ENCODE measurements at regions of chr5 and their contacts with region 1.

Region 1: GRCh38 chr5:17123010-17123409 is 94.4 kb upstream of the BASP1 start:
- DNase-seq: no peak
- ATAC-seq: peak in 2 of 4 donors; percentile 23 to 41
- H3K4me3 ChIP-seq: no peak overlapping the region
- H3K27ac ChIP-seq: no peak overlapping the region
- H3K4me1 ChIP-seq: peaks cover 0 to 17% (median 7%) of the 10 kb centered on the region in 12 donors
- H3K27me3 ChIP-seq: no peaks in the 10 kb centered on the region
- CTCF ChIP-seq: no peak
- POLR2A ChIP-seq: no peak

Region 2: DNA sequence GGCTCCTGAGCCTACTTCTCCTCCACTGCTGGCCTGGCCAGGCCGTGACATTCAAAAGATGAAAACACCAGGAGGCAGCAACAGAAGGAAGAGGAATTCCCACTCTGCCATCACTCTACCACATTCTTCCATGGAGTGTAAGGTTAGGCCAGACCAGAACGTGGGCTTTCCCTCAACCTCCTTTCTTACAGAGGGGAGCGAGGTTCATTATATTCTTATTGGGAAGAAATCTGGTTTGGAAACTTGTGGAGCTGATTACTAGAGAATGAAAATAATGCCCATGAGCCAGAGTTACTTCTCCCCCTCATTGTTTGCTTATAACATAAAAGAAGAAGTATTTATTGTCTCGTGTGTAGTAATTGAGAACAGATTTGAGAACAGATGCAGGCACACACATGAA is 41.9 kb before region 1 on chr5:
- intact Hi-C with region 1: loop called in 2 of 10 experiments (anchors 5 kb)
- DNase-seq: no peak
- ATAC-seq: no peak
- H3K4me3 ChIP-seq: no peak overlapping the region
- H3K27ac ChIP-seq: no peak overlapping the region
- H3K4me1 ChIP-seq: peaks cover 0 to 18% (median 3%) of the 10 kb centered on the region in 12 donors
- H3K27me3 ChIP-seq: no peaks in the 10 kb centered on the region
- CTCF ChIP-seq: no peak
- POLR2A ChIP-seq: no peak